Heart left ventricle (tissue), 16 donors: ENCODE measurements at regions of chr13 and their contacts with region 1.

Region 1: GRCh38 chr13:60396783-60397703 is at the start of gene TDRD3:
- DNase-seq: peak; percentile 84 to 92 (median 89)
- ATAC-seq: peak; percentile 87 to 89 (median 88)
- H3K4me3 ChIP-seq: peak within 1 kb of the TSS; percentile 43 to 85 (median 74)
- H3K27ac ChIP-seq: peak within 1 kb of the TSS; percentile 91 to 100 (median 98)
- H3K4me1 ChIP-seq: peaks cover 6 to 37% (median 20%) of the 10 kb centered on the region in 12 donors
- H3K27me3 ChIP-seq: no peaks in the 10 kb centered on the region
- CTCF ChIP-seq: peak; percentile 57 to 94 (median 74)
- POLR2A ChIP-seq: peak in 1 of 2 donors; percentile 43
- total RNA-seq, gene TDRD3: 17.1 to 56.4 (median 42.1) TPM

Region 2: GRCh38 chr13:59345316-59345715 is 1051.7 kb before region 1 on chr13:
- intact Hi-C with region 1: loop called in 1 of 10 experiments (anchors 10 kb)
- DNase-seq: peak; percentile 69 to 93 (median 85)
- ATAC-seq: peak; percentile 94 to 97 (median 96)
- H3K4me3 ChIP-seq: no peak overlapping the region
- H3K27ac ChIP-seq: peak overlapping the region in 11 of 12 donors; percentile 40 to 80 (median 65)
- H3K4me1 ChIP-seq: peaks cover 0 to 63% (median 21%) of the 10 kb centered on the region in 12 donors
- H3K27me3 ChIP-seq: no peaks in the 10 kb centered on the region
- CTCF ChIP-seq: no peak
- POLR2A ChIP-seq: no peak

Region 3: GRCh38 chr13:60163478-60164233 is 233.4 kb before region 1 on chr13 and contains the start of gene DIAPH3:
- intact Hi-C with region 1: loop called in 5 of 10 experiments (anchors 2 to 10 kb)
- DNase-seq: peak; percentile 95 to 98 (median 96)
- ATAC-seq: peak; percentile 100
- H3K4me3 ChIP-seq: peak within 1 kb of the TSS; percentile 50 to 80 (median 69)
- H3K27ac ChIP-seq: peak within 1 kb of the TSS; percentile 82 to 94 (median 90)
- H3K4me1 ChIP-seq: peaks cover 0 to 21% (median 7%) of the 10 kb centered on the region in 12 donors
- H3K27me3 ChIP-seq: no peaks in the 10 kb centered on the region
- CTCF ChIP-seq: peak in 1 of 12 donors; percentile 20
- POLR2A ChIP-seq: peak; percentile 88 to 92
- total RNA-seq, gene DIAPH3: 0.09 to 3.2 (median 0.22) TPM

Region 4: GRCh38 chr13:60351326-60351725 is 45.7 kb before region 1 on chr13:
- intact Hi-C with region 1: no loop called
- DNase-seq: no peak
- ATAC-seq: no peak
- H3K4me3 ChIP-seq: no peak overlapping the region
- H3K27ac ChIP-seq: no peak overlapping the region
- H3K4me1 ChIP-seq: no peaks in the 10 kb centered on the region
- H3K27me3 ChIP-seq: peaks cover 0 to 2% (median 0%) of the 10 kb centered on the region in 9 donors
- CTCF ChIP-seq: no peak
- POLR2A ChIP-seq: no peak

Region 5: GRCh38 chr13:60463787-60464186 is 66.7 kb after region 1 on chr13:
- intact Hi-C with region 1: no loop called
- DNase-seq: no peak
- ATAC-seq: no peak
- H3K4me3 ChIP-seq: no peak overlapping the region
- H3K27ac ChIP-seq: no peak overlapping the region
- H3K4me1 ChIP-seq: no peaks in the 10 kb centered on the region
- H3K27me3 ChIP-seq: no peaks in the 10 kb centered on the region
- CTCF ChIP-seq: no peak
- POLR2A ChIP-seq: no peak

Region 6: GRCh38 chr13:60583911-60584753 is 187.1 kb after region 1 on chr13:
- intact Hi-C with region 1: no loop called
- DNase-seq: no peak
- ATAC-seq: peak in 1 of 4 donors; percentile 58
- H3K4me3 ChIP-seq: no peak overlapping the region
- H3K27ac ChIP-seq: peak overlapping the region in 1 of 12 donors; percentile 5
- H3K4me1 ChIP-seq: no peaks in the 10 kb centered on the region
- H3K27me3 ChIP-seq: no peaks in the 10 kb centered on the region
- CTCF ChIP-seq: no peak
- POLR2A ChIP-seq: no peak